ENCODE measurements at regions of chr21 and their contacts with region 1.

Region 1: DNA sequence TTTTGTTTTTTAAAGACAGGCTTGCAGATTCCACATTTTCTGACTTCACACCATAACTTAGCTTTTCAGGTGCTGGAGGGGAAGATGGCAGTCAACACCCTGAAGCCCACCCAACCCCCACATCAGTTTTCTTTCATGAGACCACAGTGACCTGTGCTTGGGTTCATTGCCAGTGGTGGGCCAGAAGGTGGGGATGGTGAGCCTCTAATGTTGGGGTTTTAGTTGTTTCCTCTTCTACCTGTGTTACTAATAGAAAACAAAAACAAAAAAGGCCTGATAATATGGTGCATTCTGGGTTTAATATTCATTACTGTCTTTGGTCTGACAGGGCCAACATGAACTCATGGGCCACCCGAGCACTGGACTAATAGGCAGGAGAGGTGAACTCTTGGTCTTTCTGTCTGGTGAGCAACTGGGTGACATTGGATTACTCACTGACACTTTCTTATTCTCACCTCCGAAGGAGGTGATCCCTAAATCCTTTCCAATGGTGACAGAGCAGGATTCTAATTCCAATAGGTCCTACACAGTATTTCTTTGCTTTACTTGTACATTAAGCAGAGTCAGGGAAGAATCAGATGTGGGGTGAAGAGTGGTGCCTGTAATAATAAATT is 132.8 kb downstream of the CLIC6 start:
- DNase-seq: no peak
- H3K4me3 ChIP-seq: no peak overlapping the region
- H3K4me3 Mint-ChIP-seq: no peak overlapping the region
- H3K27ac Mint-ChIP-seq: no peak overlapping the region
- H3K4me1 ChIP-seq: peaks cover 33% of the 10 kb centered on the region
- H3K4me1 Mint-ChIP-seq: peaks cover 21% of the 10 kb centered on the region
- H3K27me3 ChIP-seq: no peaks in the 10 kb centered on the region
- H3K27me3 Mint-ChIP-seq: no peaks in the 10 kb centered on the region
- CTCF ChIP-seq: peak in 1 of 2 experiments; percentile 52

Region 2: GRCh38 chr21:34166468-34166867 is 635.2 kb before region 1 on chr21:
- CTCF ChIA-PET with region 1: no interaction called
- POLR2A ChIA-PET with region 1: no interaction called
- intact Hi-C with region 1: no loop called
- DNase-seq: peak in 1 of 2 experiments; percentile 27
- H3K4me3 ChIP-seq: no peak overlapping the region
- H3K4me3 Mint-ChIP-seq: no peak overlapping the region
- H3K27ac Mint-ChIP-seq: no peak overlapping the region
- H3K4me1 ChIP-seq: no peaks in the 10 kb centered on the region
- H3K4me1 Mint-ChIP-seq: no peaks in the 10 kb centered on the region
- H3K27me3 ChIP-seq: no peaks in the 10 kb centered on the region
- H3K27me3 Mint-ChIP-seq: no peaks in the 10 kb centered on the region
- CTCF ChIP-seq: no peak

Region 3: GRCh38 chr21:34707876-34708325 is 93.7 kb before region 1 on chr21:
- CTCF ChIA-PET with region 1: no interaction called
- POLR2A ChIA-PET with region 1: no interaction called
- intact Hi-C with region 1: no loop called
- DNase-seq: no peak
- H3K4me3 ChIP-seq: no peak overlapping the region
- H3K4me3 Mint-ChIP-seq: no peak overlapping the region
- H3K27ac Mint-ChIP-seq: no peak overlapping the region
- H3K4me1 ChIP-seq: no peaks in the 10 kb centered on the region
- H3K4me1 Mint-ChIP-seq: no peaks in the 10 kb centered on the region
- H3K27me3 ChIP-seq: no peaks in the 10 kb centered on the region
- H3K27me3 Mint-ChIP-seq: no peaks in the 10 kb centered on the region
- CTCF ChIP-seq: no peak

Region 4: DNA sequence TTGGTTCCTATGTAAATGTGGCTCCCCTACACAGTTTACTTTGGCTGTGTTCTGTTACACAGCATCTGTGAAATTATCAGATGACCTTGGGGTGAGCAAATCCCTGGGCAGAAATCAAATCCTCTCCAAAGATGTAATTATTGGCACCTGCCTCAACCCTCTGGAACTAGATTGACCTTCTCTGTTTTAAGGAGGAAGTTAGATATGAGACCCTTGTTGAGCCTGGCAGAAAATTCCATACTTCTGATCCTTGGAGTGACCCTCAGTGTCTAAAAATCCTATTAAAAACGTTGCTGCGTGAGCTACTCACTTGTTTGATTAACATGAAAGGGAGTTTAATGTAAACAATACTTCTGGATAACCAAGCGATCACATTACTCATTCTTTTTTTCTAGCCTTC is 10.8 kb before region 1 on chr21:
- CTCF ChIA-PET with region 1: no interaction called
- POLR2A ChIA-PET with region 1: no interaction called
- intact Hi-C with region 1: no loop called
- DNase-seq: no peak
- H3K4me3 ChIP-seq: no peak overlapping the region
- H3K4me3 Mint-ChIP-seq: no peak overlapping the region
- H3K27ac Mint-ChIP-seq: no peak overlapping the region
- H3K4me1 ChIP-seq: peaks cover 17% of the 10 kb centered on the region
- H3K4me1 Mint-ChIP-seq: peaks cover 18% of the 10 kb centered on the region
- H3K27me3 ChIP-seq: no peaks in the 10 kb centered on the region
- H3K27me3 Mint-ChIP-seq: no peaks in the 10 kb centered on the region
- CTCF ChIP-seq: no peak

Region 5: DNA sequence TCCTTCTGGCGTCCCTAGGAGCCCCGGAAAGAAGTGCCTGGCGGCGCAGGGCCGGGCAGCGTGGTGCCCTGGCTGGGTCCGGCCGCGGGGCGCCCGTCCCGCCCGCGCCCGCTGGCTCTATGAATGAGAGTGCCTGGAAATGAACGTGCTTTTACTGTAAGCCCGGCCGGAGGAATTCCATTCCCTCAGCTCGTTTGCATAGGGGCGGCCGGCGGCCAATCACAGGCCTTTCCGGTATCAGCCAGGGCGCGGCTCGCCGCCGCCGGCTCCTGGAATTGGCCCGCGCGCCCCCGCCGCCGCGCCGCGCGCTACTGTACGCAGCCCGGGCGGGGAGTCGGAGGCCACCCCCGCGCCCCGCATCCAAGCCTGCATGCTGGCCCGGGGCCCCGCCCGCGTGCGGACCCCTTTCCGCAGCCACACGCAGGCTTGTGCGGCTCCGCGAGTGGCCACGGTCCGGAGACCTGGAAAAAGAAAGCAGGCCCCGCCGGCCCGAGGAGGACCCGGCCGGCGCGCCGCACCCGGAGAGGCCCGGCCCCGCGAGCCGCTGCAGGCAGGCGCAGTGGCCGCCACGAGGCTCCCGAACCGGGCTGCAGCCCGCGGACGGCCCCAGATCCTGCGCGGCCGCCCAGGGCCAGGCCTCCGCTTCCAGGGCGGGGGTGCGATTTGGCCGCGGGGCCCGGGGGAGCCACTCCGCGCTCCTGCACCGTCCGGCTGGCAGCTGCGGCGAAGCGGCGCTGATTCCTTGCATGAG is 87.1 kb after region 1 on chr21:
- CTCF ChIA-PET with region 1: no interaction called
- POLR2A ChIA-PET with region 1: no interaction called
- intact Hi-C with region 1: loop called (anchors 1 kb)
- DNase-seq: peak; percentile 93 to 94
- H3K4me3 ChIP-seq: peak overlapping the region; percentile 78
- H3K4me3 Mint-ChIP-seq: peak overlapping the region; percentile 93
- H3K27ac Mint-ChIP-seq: peak overlapping the region; percentile 83
- H3K4me1 ChIP-seq: no peaks in the 10 kb centered on the region
- H3K4me1 Mint-ChIP-seq: no peaks in the 10 kb centered on the region
- H3K27me3 ChIP-seq: peaks cover 2% of the 10 kb centered on the region; the same call in 1 of the 2 replicates
- H3K27me3 Mint-ChIP-seq: no peaks in the 10 kb centered on the region
- CTCF ChIP-seq: no peak